ENCODE measurements at regions of chr2 and their contacts with region 1.

Region 1: GRCh38 chr2:42859006-42859552 is 66.7 kb upstream of the HAAO start:
- DNase-seq: peak; percentile 49 to 76
- ATAC-seq: peak in 2 of 3 donors; percentile 50 to 67
- H3K4me3 ChIP-seq: no peak overlapping the region
- H3K4me3 Mint-ChIP-seq: no peak overlapping the region
- H3K27ac ChIP-seq: no peak overlapping the region
- H3K27ac Mint-ChIP-seq: no peak overlapping the region
- H3K4me1 ChIP-seq: no peaks in the 10 kb centered on the region
- H3K4me1 Mint-ChIP-seq: no peaks in the 10 kb centered on the region
- H3K27me3 ChIP-seq: no peaks in the 10 kb centered on the region
- H3K27me3 Mint-ChIP-seq: no peaks in the 10 kb centered on the region
- CTCF ChIP-seq: peak; percentile 81

Region 2: GRCh38 chr2:43484323-43484930 is 625.3 kb after region 1 on chr2:
- intact Hi-C with region 1: loop called (anchors 2 kb)
- DNase-seq: peak in 1 of 2 donors; percentile 82
- ATAC-seq: peak in 2 of 3 donors; percentile 44 to 63
- H3K4me3 ChIP-seq: no peak overlapping the region
- H3K4me3 Mint-ChIP-seq: no peak overlapping the region
- H3K27ac ChIP-seq: no peak overlapping the region
- H3K27ac Mint-ChIP-seq: no peak overlapping the region
- H3K4me1 ChIP-seq: no peaks in the 10 kb centered on the region
- H3K4me1 Mint-ChIP-seq: peaks cover 9% of the 10 kb centered on the region in 2 donors
- H3K27me3 ChIP-seq: no peaks in the 10 kb centered on the region
- H3K27me3 Mint-ChIP-seq: no peaks in the 10 kb centered on the region
- CTCF ChIP-seq: peak; percentile 84

Region 3: DNA sequence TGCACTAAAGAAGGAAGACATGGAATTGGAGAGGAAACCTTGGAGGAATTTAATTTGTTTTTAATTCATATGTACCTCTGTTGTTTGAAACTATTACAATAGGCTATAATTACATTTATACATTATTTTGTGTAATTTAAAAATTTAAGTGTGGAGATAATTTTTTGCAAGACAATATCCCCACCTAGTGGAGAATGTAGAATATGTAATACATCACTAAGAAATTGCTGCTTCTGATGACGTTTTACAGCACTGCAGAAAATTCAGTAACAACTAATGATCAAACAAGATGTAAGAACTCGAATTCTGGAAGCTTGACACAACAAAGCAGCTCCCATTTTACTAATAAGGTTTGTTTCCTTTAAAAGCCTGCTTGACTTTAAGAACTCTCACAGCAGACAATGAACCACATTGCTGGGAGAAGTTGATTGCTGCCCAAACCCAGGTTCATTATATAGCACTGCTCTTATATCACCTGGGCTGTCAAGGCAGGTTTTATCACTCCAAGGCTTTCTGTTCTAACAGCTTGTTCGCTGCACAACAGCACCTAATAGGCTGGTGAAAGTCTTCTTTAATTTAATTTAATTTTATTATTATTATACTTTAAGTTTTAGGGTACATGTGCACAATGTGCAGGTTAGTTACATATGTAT is 683.3 kb after region 1 on chr2:
- intact Hi-C with region 1: loop called (anchors 10 kb)
- DNase-seq: peak in 1 of 2 donors; percentile 69
- ATAC-seq: peak in 1 of 3 donors; percentile 57
- H3K4me3 ChIP-seq: no peak overlapping the region
- H3K4me3 Mint-ChIP-seq: no peak overlapping the region
- H3K27ac ChIP-seq: no peak overlapping the region
- H3K27ac Mint-ChIP-seq: no peak overlapping the region
- H3K4me1 ChIP-seq: peaks cover 4% of the 10 kb centered on the region
- H3K4me1 Mint-ChIP-seq: no peaks in the 10 kb centered on the region
- H3K27me3 ChIP-seq: no peaks in the 10 kb centered on the region
- H3K27me3 Mint-ChIP-seq: no peaks in the 10 kb centered on the region
- CTCF ChIP-seq: peak; percentile 68

Region 4: GRCh38 chr2:43576981-43577892 is 718.2 kb after region 1 on chr2:
- intact Hi-C with region 1: loop called (anchors 10 kb)
- DNase-seq: peak in 1 of 2 donors; percentile 77
- ATAC-seq: peak; percentile 59 to 68 (median 61)
- H3K4me3 ChIP-seq: no peak overlapping the region
- H3K4me3 Mint-ChIP-seq: no peak overlapping the region
- H3K27ac ChIP-seq: no peak overlapping the region
- H3K27ac Mint-ChIP-seq: no peak overlapping the region
- H3K4me1 ChIP-seq: no peaks in the 10 kb centered on the region
- H3K4me1 Mint-ChIP-seq: no peaks in the 10 kb centered on the region
- H3K27me3 ChIP-seq: no peaks in the 10 kb centered on the region
- H3K27me3 Mint-ChIP-seq: no peaks in the 10 kb centered on the region
- CTCF ChIP-seq: peak; percentile 81

Measured in natural killer cell (primary cell).